Right ventricle myocardium inferior (tissue), 1 donor: ENCODE measurements at regions of chr19 and their contacts with region 1.

Region 1: DNA sequence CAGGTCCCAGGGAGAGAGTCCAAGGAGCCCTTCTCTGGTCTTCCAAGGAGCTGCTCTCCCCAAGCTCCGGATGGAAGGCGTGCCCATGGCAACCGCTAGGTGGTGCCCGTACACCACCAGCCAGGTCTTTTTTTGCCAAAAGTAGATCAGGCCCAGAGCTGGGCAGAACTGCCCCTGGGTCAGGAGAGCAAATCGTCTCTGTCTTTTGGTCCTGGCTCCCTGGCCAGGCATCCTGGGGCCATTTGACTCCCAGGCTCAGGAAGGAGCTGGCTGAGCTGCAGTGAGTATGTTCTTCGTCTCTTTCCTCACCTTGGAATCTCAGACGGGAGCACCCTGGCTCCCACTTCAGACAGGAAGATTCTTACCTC is 24.6 kb upstream of the BCL3 start:
- DNase-seq: peak; percentile 91
- ATAC-seq: peak; percentile 90

Region 2: GRCh38 chr19:44587963-44588770 is 135.8 kb before region 1 on chr19:
- intact Hi-C with region 1: no loop called
- DNase-seq: no peak
- ATAC-seq: no peak

Region 3: GRCh38 chr19:44689056-44689895 is 34.7 kb before region 1 on chr19:
- intact Hi-C with region 1: loop called (anchors 2 kb)
- DNase-seq: peak; percentile 85
- ATAC-seq: peak; percentile 65